ENCODE measurements at regions of chr19 and their contacts with region 1.

Region 1: DNA sequence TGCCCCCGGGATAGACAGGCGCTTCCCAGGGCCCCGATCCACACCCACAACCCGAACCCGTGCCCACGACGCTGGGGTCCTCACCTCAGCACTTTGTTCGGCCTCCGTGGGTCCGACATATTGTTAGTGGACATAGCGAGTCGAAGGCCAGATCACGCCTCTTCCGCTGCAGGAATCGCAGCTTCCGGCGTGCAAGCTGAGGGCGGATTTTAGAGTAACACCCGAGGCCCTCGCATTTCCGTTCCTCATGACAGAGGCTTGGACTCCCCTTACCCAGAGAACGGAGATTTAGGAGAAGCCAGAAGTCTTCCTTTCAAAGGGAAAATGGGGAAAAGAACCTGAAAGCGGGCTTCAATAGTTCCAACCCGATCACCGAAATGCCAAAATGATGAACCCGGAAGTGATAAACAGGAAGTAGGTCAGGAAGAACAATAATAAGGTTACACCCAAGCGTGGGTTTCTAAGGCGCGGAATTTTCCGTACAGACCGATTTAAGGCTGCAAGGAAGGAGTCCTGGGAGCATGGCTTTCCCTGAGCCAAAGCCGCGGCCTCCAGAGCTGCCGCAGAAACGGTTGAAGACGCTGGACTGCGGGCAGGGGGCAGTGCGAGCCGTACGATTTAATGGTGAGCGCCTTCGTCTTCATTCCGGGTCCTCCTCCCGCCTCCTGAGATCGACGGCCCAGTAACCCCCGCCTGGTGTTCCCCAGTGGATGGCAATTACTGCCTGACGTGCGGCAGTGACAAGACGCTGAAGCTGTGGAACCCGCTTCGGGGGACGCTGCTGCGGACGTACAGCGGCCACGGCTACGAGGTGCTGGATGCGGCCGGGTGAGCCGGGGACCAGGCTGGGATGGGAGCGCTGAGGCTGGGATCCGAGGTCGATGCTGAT is 2.9 kb downstream of the WDR83 start:
- DNase-seq: peak in 34 of 35 experiments; percentile 32 to 86 (median 67)
- ATAC-seq: peak; percentile 29 to 42 (median 41)
- H3K4me3 ChIP-seq: peak overlapping the region; percentile 91 to 99
- H3K4me3 Mint-ChIP-seq: peak overlapping the region; percentile 91 to 97 (median 93)
- H3K27ac ChIP-seq: peak overlapping the region; percentile 97
- H3K27ac Mint-ChIP-seq: peak overlapping the region; percentile 100
- H3K4me1 ChIP-seq: peaks cover 23 to 57% of the 10 kb centered on the region in 2 experiments
- H3K4me1 Mint-ChIP-seq: peaks cover 55 to 61% (median 57%) of the 10 kb centered on the region in 3 donors
- H3K27me3 ChIP-seq: no peaks in the 10 kb centered on the region
- H3K27me3 Mint-ChIP-seq: no peaks in the 10 kb centered on the region

Region 2: GRCh38 chr19:12623361-12624022 is 46.0 kb before region 1 on chr19:
- CTCF ChIA-PET with region 1: no interaction called
- POLR2A ChIA-PET with region 1: no interaction called
- DNase-seq: no peak
- ATAC-seq: no peak
- H3K4me3 ChIP-seq: no peak overlapping the region
- H3K4me3 Mint-ChIP-seq: no peak overlapping the region
- H3K27ac ChIP-seq: no peak overlapping the region
- H3K27ac Mint-ChIP-seq: no peak overlapping the region
- H3K4me1 ChIP-seq: peaks cover 0 to 9% of the 10 kb centered on the region in 2 experiments
- H3K4me1 Mint-ChIP-seq: peaks cover 14 to 23% (median 17%) of the 10 kb centered on the region in 3 donors
- H3K27me3 ChIP-seq: no peaks in the 10 kb centered on the region
- H3K27me3 Mint-ChIP-seq: no peaks in the 10 kb centered on the region

Region 3: GRCh38 chr19:12687496-12688196 is 18.1 kb after region 1 on chr19 and contains the start of gene GNG14:
- CTCF ChIA-PET with region 1: interaction called in 1 of 2 experiments, 4 read pairs
- POLR2A ChIA-PET with region 1: interaction called in 1 of 2 experiments, 11 read pairs
- DNase-seq: no peak
- ATAC-seq: no peak
- H3K4me3 ChIP-seq: no peak within 1 kb of the TSS
- H3K4me3 Mint-ChIP-seq: no peak within 1 kb of the TSS
- H3K27ac ChIP-seq: no peak within 1 kb of the TSS
- H3K27ac Mint-ChIP-seq: no peak within 1 kb of the TSS
- H3K4me1 ChIP-seq: peaks cover 0 to under 1% of the 10 kb centered on the region in 2 experiments
- H3K4me1 Mint-ChIP-seq: no peaks in the 10 kb centered on the region
- H3K27me3 ChIP-seq: no peaks in the 10 kb centered on the region
- H3K27me3 Mint-ChIP-seq: no peaks in the 10 kb centered on the region
- total RNA-seq, gene GNG14: not detected

Region 4: GRCh38 chr19:12815088-12815487 is 145.6 kb after region 1 on chr19:
- CTCF ChIA-PET with region 1: interaction called in 1 of 2 experiments, 12 read pairs
- POLR2A ChIA-PET with region 1: no interaction called
- DNase-seq: no peak
- ATAC-seq: no peak
- H3K4me3 ChIP-seq: no peak overlapping the region
- H3K4me3 Mint-ChIP-seq: no peak overlapping the region
- H3K27ac ChIP-seq: no peak overlapping the region
- H3K27ac Mint-ChIP-seq: no peak overlapping the region
- H3K4me1 ChIP-seq: no peaks in the 10 kb centered on the region
- H3K4me1 Mint-ChIP-seq: no peaks in the 10 kb centered on the region
- H3K27me3 ChIP-seq: no peaks in the 10 kb centered on the region
- H3K27me3 Mint-ChIP-seq: no peaks in the 10 kb centered on the region

Region 5: GRCh38 chr19:12859546-12859945 is 190.0 kb after region 1 on chr19:
- CTCF ChIA-PET with region 1: no interaction called
- POLR2A ChIA-PET with region 1: no interaction called
- DNase-seq: no peak
- ATAC-seq: no peak
- H3K4me3 ChIP-seq: no peak overlapping the region
- H3K4me3 Mint-ChIP-seq: no peak overlapping the region
- H3K27ac ChIP-seq: no peak overlapping the region
- H3K27ac Mint-ChIP-seq: no peak overlapping the region
- H3K4me1 ChIP-seq: no peaks in the 10 kb centered on the region
- H3K4me1 Mint-ChIP-seq: no peaks in the 10 kb centered on the region
- H3K27me3 ChIP-seq: peaks cover 2 to 24% of the 10 kb centered on the region in 2 experiments
- H3K27me3 Mint-ChIP-seq: peaks cover 0 to 5% of the 10 kb centered on the region in 2 donors

Region 6: DNA sequence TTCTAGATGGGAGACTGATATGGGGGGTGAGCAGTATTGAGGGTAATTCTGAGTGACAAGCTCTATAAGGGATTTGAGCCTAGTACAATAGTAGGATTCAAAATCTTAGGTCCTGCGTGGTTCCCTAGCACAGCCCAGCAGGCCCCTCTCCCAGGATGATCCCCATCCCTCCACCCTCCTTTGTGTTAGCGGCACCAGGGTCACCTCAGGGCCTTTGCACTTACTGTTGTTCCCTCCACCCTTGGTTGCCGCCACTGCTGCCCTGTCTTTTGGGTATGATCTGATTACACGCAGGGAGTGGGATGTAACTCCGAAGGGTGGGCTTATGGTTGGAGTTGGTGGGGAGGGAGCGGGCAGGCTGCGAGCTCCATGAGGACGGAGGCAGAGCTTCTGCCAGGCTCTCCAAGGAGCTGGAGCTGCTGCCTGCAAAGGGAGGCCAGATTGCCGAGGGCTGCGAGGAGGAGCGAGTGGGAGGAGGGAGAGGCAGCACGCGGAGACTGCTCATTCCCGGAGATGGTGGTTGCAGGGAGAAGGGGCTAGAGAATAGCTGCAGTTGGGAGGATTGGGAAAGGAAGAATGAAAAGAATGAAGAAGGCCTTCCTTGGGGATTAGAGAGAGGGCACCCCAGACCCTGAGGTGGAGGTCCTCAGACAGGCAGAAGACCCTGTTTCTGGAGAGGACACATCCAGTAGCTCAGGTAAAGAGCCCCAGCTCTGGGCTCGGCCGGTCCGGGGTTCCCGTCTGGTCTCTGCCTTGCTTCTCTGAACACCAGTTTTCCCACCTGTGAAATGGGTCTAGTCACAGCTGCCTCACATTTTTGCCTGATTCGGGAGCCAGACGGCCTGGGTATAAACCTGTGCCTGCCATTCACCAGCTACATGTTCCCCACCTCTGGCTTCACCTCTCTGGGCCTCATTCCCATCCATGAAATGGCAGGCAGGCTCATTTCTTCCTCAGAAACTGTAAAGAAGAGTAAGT is 453.8 kb after region 1 on chr19:
- CTCF ChIA-PET with region 1: no interaction called
- POLR2A ChIA-PET with region 1: interaction called in 1 of 2 experiments, 16 read pairs
- DNase-seq: no peak
- ATAC-seq: no peak
- H3K4me3 ChIP-seq: no peak overlapping the region
- H3K4me3 Mint-ChIP-seq: no peak overlapping the region
- H3K27ac ChIP-seq: no peak overlapping the region
- H3K27ac Mint-ChIP-seq: no peak overlapping the region
- H3K4me1 ChIP-seq: peaks cover 10 to 40% of the 10 kb centered on the region in 2 experiments
- H3K4me1 Mint-ChIP-seq: peaks cover 44 to 51% (median 49%) of the 10 kb centered on the region in 3 donors
- H3K27me3 ChIP-seq: no peaks in the 10 kb centered on the region
- H3K27me3 Mint-ChIP-seq: no peaks in the 10 kb centered on the region

Region 7: DNA sequence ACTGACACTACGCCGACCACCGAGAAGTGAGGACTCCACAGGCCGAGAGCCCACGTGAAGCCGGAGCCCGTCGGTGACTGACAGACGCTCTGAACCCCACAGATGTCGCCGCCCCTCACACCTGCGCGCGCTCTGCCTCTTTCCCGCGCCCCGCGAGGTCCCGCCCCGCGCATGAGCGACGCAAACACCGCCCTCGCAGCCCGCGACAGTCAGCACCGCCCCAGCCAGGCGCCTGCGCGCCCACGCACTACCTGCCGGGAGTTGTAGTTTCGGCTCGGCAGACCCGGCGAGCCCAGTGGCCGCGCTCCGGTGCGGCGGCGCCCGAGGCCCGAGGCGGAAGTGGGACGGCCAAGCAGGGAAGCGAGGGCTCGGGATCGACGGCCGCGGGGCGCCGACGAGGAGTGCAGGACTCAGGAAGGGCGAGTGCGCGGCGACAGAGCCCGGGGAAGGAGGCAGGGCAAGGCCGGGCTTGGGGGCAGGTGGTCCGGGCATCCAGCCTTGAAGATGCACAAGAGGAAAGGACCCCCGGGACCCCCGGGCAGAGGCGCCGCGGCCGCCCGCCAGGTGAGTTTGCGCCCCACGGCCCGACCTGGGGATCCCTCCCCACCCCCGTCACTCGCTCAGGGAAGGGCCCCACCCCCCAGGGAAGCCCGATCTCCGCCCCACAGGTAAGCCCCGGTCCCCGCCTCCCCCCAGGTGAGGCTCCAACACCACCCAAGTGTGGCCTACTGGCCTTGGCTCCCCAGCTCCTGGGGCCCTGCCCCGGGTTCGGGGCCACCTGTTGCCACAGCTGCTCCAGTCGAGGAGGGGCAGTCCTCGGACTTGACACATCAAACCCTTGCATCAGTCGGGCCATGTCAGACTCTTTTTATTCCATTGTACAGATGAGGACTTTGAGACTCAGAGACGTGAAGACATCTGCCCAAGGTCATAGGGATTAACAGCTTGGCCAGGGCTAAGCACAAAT is 1236.7 kb after region 1 on chr19 and contains the starts of genes BRME1 and CC2D1A:
- CTCF ChIA-PET with region 1: no interaction called
- POLR2A ChIA-PET with region 1: no interaction called
- DNase-seq: peak; percentile 84 to 95 (median 93)
- ATAC-seq: peak; percentile 99 to 100 (median 99)
- H3K4me3 ChIP-seq: peak within 1 kb of the TSS; percentile 65 to 67
- H3K4me3 Mint-ChIP-seq: peak within 1 kb of the TSS; percentile 78 to 85 (median 83)
- H3K27ac ChIP-seq: peak within 1 kb of the TSS; percentile 15
- H3K27ac Mint-ChIP-seq: peak within 1 kb of the TSS; percentile 76 to 85
- H3K4me1 ChIP-seq: peaks cover 7 to 20% of the 10 kb centered on the region in 2 experiments
- H3K4me1 Mint-ChIP-seq: peaks cover 14 to 25% (median 17%) of the 10 kb centered on the region in 3 donors
- H3K27me3 ChIP-seq: no peaks in the 10 kb centered on the region
- H3K27me3 Mint-ChIP-seq: no peaks in the 10 kb centered on the region
- total RNA-seq, gene BRME1: 1.3 to 3.6 (median 1.7) TPM
- total RNA-seq, gene CC2D1A: 25.9 to 41.3 (median 37.4) TPM